Posterior vena cava (tissue), 2 donors: ENCODE measurements at regions of chr7 and their contacts with region 1.

Region 1: DNA sequence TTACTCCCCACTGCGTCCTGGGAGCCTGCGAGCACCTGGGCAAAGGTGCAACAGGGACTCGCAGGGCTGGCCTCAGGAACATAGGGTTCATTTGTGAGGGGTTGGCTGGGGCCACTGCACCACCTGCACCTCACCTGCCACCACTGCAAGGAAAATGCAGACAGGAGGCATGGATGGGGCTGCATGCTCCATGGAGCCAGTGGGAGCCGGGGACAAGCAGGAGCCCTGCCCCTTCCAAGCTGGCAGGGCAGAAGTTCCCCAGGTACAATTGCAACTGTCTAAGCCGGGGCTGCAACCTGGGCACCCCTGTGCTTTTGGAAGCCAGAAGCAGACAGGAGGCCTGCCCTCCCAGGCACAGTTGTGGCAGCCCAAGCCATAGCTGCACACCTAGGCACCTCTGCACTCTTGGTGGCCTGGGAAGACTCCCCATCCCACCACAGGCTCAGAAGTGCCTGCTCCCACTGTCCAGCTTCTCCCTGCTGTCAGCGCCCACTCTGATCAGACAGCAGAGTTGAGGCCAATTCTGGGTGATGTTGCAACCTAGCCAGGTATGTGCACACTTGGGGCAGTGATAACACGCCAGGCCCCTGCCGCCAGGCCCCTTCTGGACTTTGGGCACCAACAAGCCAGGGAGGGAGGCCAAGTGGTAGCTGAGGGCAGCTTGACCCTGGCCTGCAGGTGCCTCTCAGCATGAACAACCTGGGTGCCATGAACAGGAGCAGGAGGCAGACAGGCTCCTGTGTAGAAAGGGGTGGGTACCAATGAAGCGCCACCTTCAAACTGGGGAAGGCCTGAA is 58.2 kb downstream of the TMEM106B start:
- DNase-seq: no peak

Region 2: GRCh38 chr7:11155883-11156282 is 1113.4 kb before region 1 on chr7:
- intact Hi-C with region 1: loop called in 1 of 2 experiments (anchors 5 kb)
- DNase-seq: no peak

Region 3: DNA sequence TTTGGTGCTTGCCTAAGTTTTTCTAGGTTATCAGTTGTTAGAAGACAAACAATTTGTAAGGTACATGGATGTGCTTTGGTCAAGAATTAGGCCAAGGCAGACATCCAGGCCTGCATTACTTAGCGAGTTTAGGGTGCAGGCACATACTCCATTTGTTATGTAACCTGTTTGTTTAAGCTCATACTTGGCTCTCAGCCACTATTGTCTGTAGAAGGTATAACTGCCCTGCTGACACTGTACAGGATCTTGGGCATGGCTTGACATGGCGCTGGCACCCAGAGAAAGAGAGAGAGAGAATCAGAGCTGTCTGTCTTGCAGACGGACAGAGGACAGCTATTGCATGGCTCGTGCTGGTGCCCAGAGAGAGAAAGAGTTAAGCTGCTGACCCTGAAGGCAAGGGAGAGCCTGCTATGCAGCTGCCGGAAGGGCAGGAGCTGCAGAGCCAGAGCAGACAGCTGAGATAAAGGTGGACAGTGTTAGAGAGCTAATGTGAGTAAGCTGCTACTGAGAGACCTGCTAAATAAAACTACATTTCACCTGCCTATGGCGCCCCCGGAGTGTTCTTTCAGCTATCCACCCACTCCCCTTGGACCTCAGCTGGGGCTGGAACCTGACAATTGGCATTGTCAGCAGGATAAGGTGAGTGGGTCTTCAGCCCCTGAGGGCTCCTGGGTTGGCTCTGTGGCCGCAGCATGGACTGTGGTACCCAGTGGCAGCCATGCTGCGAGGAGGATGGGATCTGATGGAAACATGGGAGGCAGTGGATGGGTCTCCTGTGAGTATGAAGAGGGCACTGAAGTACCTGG is 179.1 kb before region 1 on chr7:
- intact Hi-C with region 1: loop called in 1 of 2 experiments (anchors 10 kb)
- DNase-seq: no peak

Region 4: GRCh38 chr7:13748998-13749397 is 1479.7 kb after region 1 on chr7:
- intact Hi-C with region 1: no loop called
- DNase-seq: no peak